CD14-positive monocyte (primary cell): ENCODE measurements at regions of chr10 and their contacts with region 1.

Region 1: GRCh38 chr10:62610649-62611229 is 193.8 kb upstream of the ADO start:
- DNase-seq: peak; percentile 71 to 84 (median 79)
- H3K4me3 ChIP-seq: no peak overlapping the region
- H3K4me3 Mint-ChIP-seq: no peak overlapping the region
- H3K27ac ChIP-seq: no peak overlapping the region
- H3K27ac Mint-ChIP-seq: peak overlapping the region in 5 of 7 donors; percentile 14 to 68 (median 57)
- H3K4me1 ChIP-seq: peaks cover 24 to 25% of the 10 kb centered on the region in 2 donors
- H3K4me1 Mint-ChIP-seq: peaks cover 26% of the 10 kb centered on the region
- H3K27me3 ChIP-seq: no peaks in the 10 kb centered on the region
- H3K27me3 Mint-ChIP-seq: peaks cover 4 to 7% (median 6%) of the 10 kb centered on the region in 3 donors
- CTCF ChIP-seq: peak; percentile 96

Region 2: GRCh38 chr10:62647375-62648092 is 36.8 kb after region 1 on chr10:
- intact Hi-C with region 1: loop called (anchors 5 kb)
- DNase-seq: peak in 2 of 3 donors; percentile 27 to 30
- H3K4me3 ChIP-seq: no peak overlapping the region
- H3K4me3 Mint-ChIP-seq: no peak overlapping the region
- H3K27ac ChIP-seq: no peak overlapping the region
- H3K27ac Mint-ChIP-seq: peak overlapping the region in 1 of 7 donors; percentile 54
- H3K4me1 ChIP-seq: peaks cover 29 to 41% of the 10 kb centered on the region in 2 donors
- H3K4me1 Mint-ChIP-seq: peaks cover 29% of the 10 kb centered on the region
- H3K27me3 ChIP-seq: no peaks in the 10 kb centered on the region
- H3K27me3 Mint-ChIP-seq: peaks cover 0 to 2% (median 0%) of the 10 kb centered on the region in 3 donors
- CTCF ChIP-seq: no peak

Region 3: GRCh38 chr10:62653254-62653653 is 42.5 kb after region 1 on chr10:
- intact Hi-C with region 1: loop called (anchors 5 kb)
- DNase-seq: peak; percentile 52 to 79 (median 74)
- H3K4me3 ChIP-seq: no peak overlapping the region
- H3K4me3 Mint-ChIP-seq: no peak overlapping the region
- H3K27ac ChIP-seq: peak overlapping the region in 1 of 2 donors; percentile 34
- H3K27ac Mint-ChIP-seq: peak overlapping the region in 6 of 7 donors; percentile 35 to 76 (median 72)
- H3K4me1 ChIP-seq: peaks cover 25 to 30% of the 10 kb centered on the region in 2 donors
- H3K4me1 Mint-ChIP-seq: peaks cover 23% of the 10 kb centered on the region
- H3K27me3 ChIP-seq: no peaks in the 10 kb centered on the region
- H3K27me3 Mint-ChIP-seq: peaks cover 0 to 4% (median 0%) of the 10 kb centered on the region in 3 donors
- CTCF ChIP-seq: no peak

Region 4: GRCh38 chr10:62681211-62681940 is 70.6 kb after region 1 on chr10:
- intact Hi-C with region 1: loop called in 1 of 2 experiments (anchors 5 kb)
- DNase-seq: peak; percentile 85 to 99 (median 94)
- H3K4me3 ChIP-seq: peak overlapping the region in 1 of 3 experiments; percentile 1
- H3K4me3 Mint-ChIP-seq: peak overlapping the region in 1 of 2 donors; percentile 20
- H3K27ac ChIP-seq: peak overlapping the region; percentile 21 to 62
- H3K27ac Mint-ChIP-seq: peak overlapping the region; percentile 30 to 88 (median 53)
- H3K4me1 ChIP-seq: peaks cover 16 to 18% of the 10 kb centered on the region in 2 donors
- H3K4me1 Mint-ChIP-seq: peaks cover 26% of the 10 kb centered on the region
- H3K27me3 ChIP-seq: no peaks in the 10 kb centered on the region
- H3K27me3 Mint-ChIP-seq: no peaks in the 10 kb centered on the region
- CTCF ChIP-seq: peak; percentile 26

Region 5: GRCh38 chr10:63595072-63595471 is 984.3 kb after region 1 on chr10:
- intact Hi-C with region 1: no loop called
- DNase-seq: no peak
- H3K4me3 ChIP-seq: no peak overlapping the region
- H3K4me3 Mint-ChIP-seq: no peak overlapping the region
- H3K27ac ChIP-seq: no peak overlapping the region
- H3K27ac Mint-ChIP-seq: no peak overlapping the region
- H3K4me1 ChIP-seq: no peaks in the 10 kb centered on the region
- H3K4me1 Mint-ChIP-seq: peaks cover 9% of the 10 kb centered on the region
- H3K27me3 ChIP-seq: no peaks in the 10 kb centered on the region
- H3K27me3 Mint-ChIP-seq: no peaks in the 10 kb centered on the region
- CTCF ChIP-seq: no peak